CD8-positive, alpha-beta T cell (primary cell): ENCODE measurements at regions of chr11 and their contacts with region 1.

Region 1: DNA sequence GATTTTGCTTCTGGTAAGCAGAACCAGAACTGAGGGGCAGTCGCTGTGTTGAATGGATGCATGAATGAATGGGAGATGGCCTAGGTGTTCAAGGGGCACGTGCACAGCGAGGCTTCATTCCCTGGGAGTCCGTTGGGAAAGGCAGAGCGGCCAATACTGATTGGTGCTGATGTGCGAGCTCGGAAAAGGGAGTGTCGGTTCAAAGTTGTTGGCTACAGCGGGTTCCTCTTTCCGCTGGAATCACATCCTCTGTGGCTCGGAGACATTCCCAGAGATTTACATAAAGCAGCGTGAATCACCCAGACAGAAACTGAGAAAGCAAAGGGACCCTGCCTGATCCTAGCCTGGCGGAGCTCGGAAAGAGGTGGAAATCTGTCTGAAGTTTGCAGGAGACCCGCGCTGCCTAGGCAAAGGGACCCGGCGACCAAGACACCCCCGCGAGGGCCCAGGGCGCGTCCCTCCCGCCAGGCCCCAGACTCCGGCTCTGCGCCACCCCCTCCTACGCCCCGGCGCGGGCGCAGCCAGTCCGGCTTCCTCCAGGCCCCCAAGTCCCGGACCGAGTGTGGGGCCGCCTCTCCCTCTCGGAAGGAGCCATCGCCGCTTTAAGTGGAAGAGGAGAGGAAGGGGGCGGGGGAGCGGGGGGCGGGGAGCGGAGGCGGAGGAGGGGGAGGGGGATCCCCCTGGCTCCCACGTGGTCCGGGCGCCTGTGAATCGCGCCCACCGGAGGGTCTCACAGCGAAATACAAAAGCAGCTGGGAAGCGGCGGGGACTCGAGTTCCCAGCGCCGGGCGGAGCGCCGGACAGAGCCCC is at the start of gene FJX1:
- DNase-seq: peak in 2 of 9 experiments; percentile 5 to 18
- ATAC-seq: no peak
- H3K4me3 ChIP-seq: no peak within 1 kb of the TSS
- H3K4me3 Mint-ChIP-seq: peak within 1 kb of the TSS; percentile 79
- H3K27ac ChIP-seq: no peak within 1 kb of the TSS
- H3K27ac Mint-ChIP-seq: no peak within 1 kb of the TSS
- H3K4me1 ChIP-seq: peaks cover 17% of the 10 kb centered on the region
- H3K4me1 Mint-ChIP-seq: peaks cover 14% of the 10 kb centered on the region
- H3K27me3 ChIP-seq: peaks cover 5 to 25% of the 10 kb centered on the region in 2 experiments
- H3K27me3 Mint-ChIP-seq: peaks cover 48% of the 10 kb centered on the region
- CTCF ChIP-seq: no peak
- total RNA-seq, gene FJX1: not detected

Region 2: GRCh38 chr11:34926101-34926830 is 691.6 kb before region 1 on chr11:
- CTCF ChIA-PET with region 1: no interaction called
- POLR2A ChIA-PET with region 1: no interaction called
- intact Hi-C with region 1: loop called in 1 of 2 experiments (anchors 2 kb)
- DNase-seq: peak in 3 of 9 experiments; percentile 12 to 73 (median 63)
- ATAC-seq: peak; percentile 71
- H3K4me3 ChIP-seq: no peak overlapping the region
- H3K4me3 Mint-ChIP-seq: no peak overlapping the region
- H3K27ac ChIP-seq: no peak overlapping the region
- H3K27ac Mint-ChIP-seq: no peak overlapping the region
- H3K4me1 ChIP-seq: peaks cover 3% of the 10 kb centered on the region
- H3K4me1 Mint-ChIP-seq: peaks cover 29% of the 10 kb centered on the region
- H3K27me3 ChIP-seq: no peaks in the 10 kb centered on the region
- H3K27me3 Mint-ChIP-seq: no peaks in the 10 kb centered on the region
- CTCF ChIP-seq: peak; percentile 96

Region 3: DNA sequence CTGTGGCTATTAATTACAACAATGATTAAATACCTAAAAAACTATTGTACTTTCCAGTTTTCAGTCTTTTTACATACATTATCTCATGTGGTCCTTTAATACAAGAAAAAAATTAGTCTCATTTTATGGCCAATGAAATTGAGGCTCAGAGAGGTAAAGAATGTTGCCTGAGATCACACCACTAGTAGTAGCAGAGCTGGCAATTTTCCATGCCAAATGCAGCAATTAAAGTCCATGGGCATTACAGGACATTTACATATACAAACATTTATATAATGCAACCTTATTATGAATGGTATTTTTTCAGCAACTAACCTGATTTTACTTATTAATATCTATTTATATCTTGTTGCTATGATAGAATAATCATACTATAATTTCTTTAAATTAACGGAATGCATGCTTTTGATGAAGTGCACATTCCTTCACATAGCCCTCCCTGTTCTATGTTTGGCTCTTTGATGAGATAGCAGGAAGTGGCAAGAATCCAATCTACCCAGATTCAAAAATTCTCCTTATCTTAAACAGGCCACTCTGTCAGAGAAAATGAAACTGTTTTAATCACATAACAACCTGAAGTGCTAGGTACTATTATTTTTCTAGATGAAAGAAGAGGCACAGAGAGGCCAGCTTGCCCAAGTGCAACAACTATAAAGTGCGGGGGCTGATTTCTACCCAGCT is 205.1 kb after region 1 on chr11:
- CTCF ChIA-PET with region 1: interaction called, 5 read pairs
- POLR2A ChIA-PET with region 1: no interaction called
- intact Hi-C with region 1: loop called (anchors 1 to 2 kb)
- DNase-seq: no peak
- ATAC-seq: no peak
- H3K4me3 ChIP-seq: no peak overlapping the region
- H3K4me3 Mint-ChIP-seq: no peak overlapping the region
- H3K27ac ChIP-seq: no peak overlapping the region
- H3K27ac Mint-ChIP-seq: no peak overlapping the region
- H3K4me1 ChIP-seq: no peaks in the 10 kb centered on the region
- H3K4me1 Mint-ChIP-seq: peaks cover 13% of the 10 kb centered on the region
- H3K27me3 ChIP-seq: no peaks in the 10 kb centered on the region
- H3K27me3 Mint-ChIP-seq: peaks cover 3% of the 10 kb centered on the region
- CTCF ChIP-seq: no peak

Region 4: GRCh38 chr11:36131721-36132397 is 514.0 kb after region 1 on chr11:
- CTCF ChIA-PET with region 1: interaction called, 6 read pairs
- POLR2A ChIA-PET with region 1: no interaction called
- intact Hi-C with region 1: loop called (anchors 1 to 2 kb)
- DNase-seq: peak in 3 of 9 experiments; percentile 3 to 28 (median 7)
- ATAC-seq: no peak
- H3K4me3 ChIP-seq: no peak overlapping the region
- H3K4me3 Mint-ChIP-seq: no peak overlapping the region
- H3K27ac ChIP-seq: no peak overlapping the region
- H3K27ac Mint-ChIP-seq: no peak overlapping the region
- H3K4me1 ChIP-seq: no peaks in the 10 kb centered on the region
- H3K4me1 Mint-ChIP-seq: no peaks in the 10 kb centered on the region
- H3K27me3 ChIP-seq: no peaks in the 10 kb centered on the region
- H3K27me3 Mint-ChIP-seq: peaks cover 18% of the 10 kb centered on the region
- CTCF ChIP-seq: no peak

Region 5: DNA sequence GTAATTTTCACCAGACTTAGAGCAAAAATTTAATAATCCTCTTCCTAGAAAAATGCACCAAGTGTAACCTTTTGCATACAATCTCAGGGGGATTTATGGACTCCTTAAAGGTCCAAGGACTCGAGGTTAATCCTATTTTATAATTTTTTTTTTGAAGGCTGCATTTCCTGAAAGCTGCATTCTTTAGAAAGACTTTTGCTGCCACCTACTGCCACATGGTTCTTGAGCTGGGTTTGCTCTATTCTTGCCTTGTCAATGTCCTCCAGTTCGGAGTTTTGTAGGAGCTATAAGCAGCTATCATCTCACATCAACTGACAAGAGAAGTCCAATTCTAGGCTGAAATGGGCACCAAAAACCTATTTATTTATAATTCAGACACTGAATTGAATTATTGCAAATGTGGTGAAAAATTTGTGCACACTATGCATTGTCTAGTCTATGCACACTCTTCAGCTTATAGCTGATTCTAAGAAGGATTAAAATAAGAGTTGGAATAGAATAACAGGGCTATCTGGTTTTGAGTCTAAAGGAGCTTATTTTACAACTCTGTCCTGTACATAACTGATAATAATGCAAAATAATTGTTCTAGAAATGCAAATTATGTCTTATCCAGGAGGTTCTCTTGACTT is 860.9 kb after region 1 on chr11:
- CTCF ChIA-PET with region 1: no interaction called
- POLR2A ChIA-PET with region 1: no interaction called
- intact Hi-C with region 1: loop called in 1 of 2 experiments (anchors 5 kb)
- DNase-seq: peak in 3 of 9 experiments; percentile 24 to 66 (median 60)
- ATAC-seq: no peak
- H3K4me3 ChIP-seq: no peak overlapping the region
- H3K4me3 Mint-ChIP-seq: no peak overlapping the region
- H3K27ac ChIP-seq: no peak overlapping the region
- H3K27ac Mint-ChIP-seq: no peak overlapping the region
- H3K4me1 ChIP-seq: no peaks in the 10 kb centered on the region
- H3K4me1 Mint-ChIP-seq: peaks cover 6% of the 10 kb centered on the region
- H3K27me3 ChIP-seq: no peaks in the 10 kb centered on the region
- H3K27me3 Mint-ChIP-seq: no peaks in the 10 kb centered on the region
- CTCF ChIP-seq: peak; percentile 39

Region 6: GRCh38 chr11:36746886-36747710 is 1129.2 kb after region 1 on chr11:
- CTCF ChIA-PET with region 1: no interaction called
- POLR2A ChIA-PET with region 1: no interaction called
- intact Hi-C with region 1: loop called in 1 of 2 experiments (anchors 1 kb)
- DNase-seq: peak; percentile 62 to 91 (median 77)
- ATAC-seq: peak; percentile 100
- H3K4me3 ChIP-seq: no peak overlapping the region
- H3K4me3 Mint-ChIP-seq: no peak overlapping the region
- H3K27ac ChIP-seq: no peak overlapping the region
- H3K27ac Mint-ChIP-seq: no peak overlapping the region
- H3K4me1 ChIP-seq: no peaks in the 10 kb centered on the region
- H3K4me1 Mint-ChIP-seq: peaks cover 5% of the 10 kb centered on the region
- H3K27me3 ChIP-seq: no peaks in the 10 kb centered on the region
- H3K27me3 Mint-ChIP-seq: peaks cover 27% of the 10 kb centered on the region
- CTCF ChIP-seq: peak; percentile 91